Stomach (tissue), 19 donors: ENCODE measurements at regions of chr11 and their contacts with region 1.

Region 1: DNA sequence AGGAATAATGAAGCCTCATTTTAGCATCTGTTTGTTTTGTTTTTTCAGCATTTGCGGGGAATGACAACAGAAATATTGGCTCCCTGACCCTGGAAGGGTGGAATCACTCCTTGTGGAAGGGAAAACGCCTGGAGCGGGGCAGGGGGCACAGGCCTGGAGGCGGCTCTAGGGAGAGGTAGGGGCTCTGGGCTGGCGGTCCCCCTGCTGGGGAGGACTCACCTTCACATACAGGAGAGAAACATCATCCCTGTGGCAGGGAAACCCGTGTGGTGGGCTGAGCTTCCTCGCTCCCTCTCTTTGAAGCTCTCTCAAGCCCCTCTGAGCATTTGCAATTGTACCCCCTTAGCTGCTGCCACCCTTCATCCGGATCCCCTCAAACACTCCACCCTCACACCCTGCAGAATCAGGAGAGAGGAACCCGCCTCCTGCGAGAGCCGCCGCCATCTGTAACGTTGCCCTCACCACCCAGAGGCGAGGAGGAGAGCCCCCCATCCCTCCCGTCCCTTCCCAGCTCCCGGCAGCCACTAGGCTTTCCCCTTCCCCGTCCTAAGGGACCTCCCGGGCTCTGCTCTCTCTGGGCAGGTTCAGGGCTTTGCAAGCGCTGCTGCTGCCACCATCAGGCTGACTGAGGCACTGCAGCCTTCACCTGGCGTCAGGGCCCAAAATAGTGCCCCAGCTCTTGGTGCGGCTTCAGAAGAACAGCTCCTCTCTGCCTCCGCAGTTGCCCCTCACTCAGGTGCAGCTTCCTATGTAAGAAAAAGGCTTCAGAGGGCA is 10.4 kb downstream of the KIRREL3 start:
- DNase-seq: peak; percentile 72 to 87
- H3K4me3 ChIP-seq: no peak overlapping the region
- H3K27ac ChIP-seq: no peak overlapping the region
- H3K4me1 ChIP-seq: peaks cover 0 to 8% (median 0%) of the 10 kb centered on the region in 4 donors
- H3K27me3 ChIP-seq: peaks cover 0 to 50% (median 21%) of the 10 kb centered on the region in 3 donors
- CTCF ChIP-seq: peak in 6 of 7 experiments; percentile 44 to 94 (median 84)
- EP300 ChIP-seq: no peak
- POLR2A ChIP-seq: no peak

Region 2: GRCh38 chr11:126440792-126441514 is 549.2 kb before region 1 on chr11:
- intact Hi-C with region 1: loop called (anchors 5 kb)
- DNase-seq: peak; percentile 83 to 92
- H3K4me3 ChIP-seq: no peak overlapping the region
- H3K27ac ChIP-seq: no peak overlapping the region
- H3K4me1 ChIP-seq: peaks cover 0 to 11% (median 7%) of the 10 kb centered on the region in 4 donors
- H3K27me3 ChIP-seq: peaks cover 0 to 38% (median 0%) of the 10 kb centered on the region in 3 donors
- CTCF ChIP-seq: peak in 5 of 7 experiments; percentile 90 to 98 (median 94)
- EP300 ChIP-seq: no peak
- POLR2A ChIP-seq: no peak

Region 3: DNA sequence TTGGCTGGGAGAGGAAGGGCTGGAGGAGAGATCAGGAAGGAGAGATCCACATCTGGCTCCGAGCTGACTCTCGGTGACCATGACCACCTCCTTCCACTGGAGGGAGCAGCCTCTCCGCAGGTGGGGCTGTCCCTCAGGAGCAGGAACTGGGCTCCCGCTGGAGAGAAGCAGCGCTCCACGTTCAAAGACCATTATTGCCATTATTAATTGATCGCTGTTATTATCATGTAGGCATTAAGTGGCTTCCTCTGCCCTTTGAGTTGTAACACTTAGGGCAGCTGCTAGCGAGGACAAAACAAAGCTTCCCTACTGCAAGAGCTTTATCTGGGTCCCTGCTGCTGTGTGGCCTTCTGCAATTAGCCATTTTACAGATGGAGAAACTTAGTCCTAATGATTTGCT is 382.8 kb before region 1 on chr11:
- intact Hi-C with region 1: loop called (anchors 10 kb)
- DNase-seq: peak; percentile 64 to 80
- H3K4me3 ChIP-seq: no peak overlapping the region
- H3K27ac ChIP-seq: no peak overlapping the region
- H3K4me1 ChIP-seq: peaks cover 0 to 6% (median 0%) of the 10 kb centered on the region in 4 donors
- H3K27me3 ChIP-seq: peaks cover 0 to 69% (median 19%) of the 10 kb centered on the region in 3 donors
- CTCF ChIP-seq: peak in 5 of 7 experiments; percentile 38 to 72 (median 57)
- EP300 ChIP-seq: no peak
- POLR2A ChIP-seq: no peak

Region 4: DNA sequence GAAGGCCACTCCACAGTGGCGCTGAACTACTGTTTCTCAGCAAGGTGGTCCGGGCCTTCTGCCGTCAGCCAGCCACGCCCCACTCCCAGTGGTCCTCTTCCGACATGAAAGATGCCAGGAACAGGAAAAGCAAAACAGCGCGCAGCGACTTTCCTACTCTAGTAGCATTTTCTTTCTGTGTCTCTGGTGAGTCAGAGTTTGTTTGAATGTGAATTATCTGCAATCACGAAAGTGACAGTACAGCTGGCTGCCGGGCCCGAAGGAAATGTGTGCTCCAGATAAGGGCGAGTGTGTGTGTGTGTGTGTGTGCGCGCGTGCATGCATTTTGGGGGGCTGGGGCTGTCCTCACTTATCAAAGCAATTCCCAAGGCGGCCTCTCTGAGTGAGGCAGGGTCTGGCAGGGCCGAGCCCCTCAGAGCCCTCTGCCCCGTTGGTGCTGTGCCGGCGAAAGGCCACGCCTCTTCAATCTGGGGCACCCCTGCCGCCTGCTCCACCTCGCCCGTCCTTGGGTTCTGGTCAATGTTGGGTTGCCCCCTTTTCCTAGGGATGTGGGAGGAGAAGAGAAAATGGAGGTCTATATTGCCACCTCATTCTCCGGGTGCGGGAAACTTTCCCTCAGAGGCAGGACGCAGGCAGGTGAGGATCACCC is 278.0 kb before region 1 on chr11:
- intact Hi-C with region 1: loop called (anchors 5 kb)
- DNase-seq: peak in 1 of 2 donors; percentile 24
- H3K4me3 ChIP-seq: no peak overlapping the region
- H3K27ac ChIP-seq: no peak overlapping the region
- H3K4me1 ChIP-seq: no peaks in the 10 kb centered on the region
- H3K27me3 ChIP-seq: peaks cover 0 to 60% (median 12%) of the 10 kb centered on the region in 3 donors
- CTCF ChIP-seq: no peak
- EP300 ChIP-seq: no peak
- POLR2A ChIP-seq: no peak

Region 5: GRCh38 chr11:126720539-126721235 is 269.4 kb before region 1 on chr11:
- intact Hi-C with region 1: loop called (anchors 2 kb)
- DNase-seq: no peak
- H3K4me3 ChIP-seq: no peak overlapping the region
- H3K27ac ChIP-seq: no peak overlapping the region
- H3K4me1 ChIP-seq: no peaks in the 10 kb centered on the region
- H3K27me3 ChIP-seq: peaks cover 0 to 17% (median 0%) of the 10 kb centered on the region in 3 donors
- CTCF ChIP-seq: no peak
- EP300 ChIP-seq: no peak
- POLR2A ChIP-seq: no peak